PC-9 (cell line): ENCODE measurements at regions of chr2 and their contacts with region 1.

Region 1: GRCh38 chr2:181085734-181086133 is 105.3 kb downstream of the UBE2E3 start:
- DNase-seq: no peak
- H3K4me3 ChIP-seq: no peak overlapping the region
- H3K27ac ChIP-seq: no peak overlapping the region
- H3K4me1 ChIP-seq: no peaks in the 10 kb centered on the region
- H3K27me3 ChIP-seq: no peaks in the 10 kb centered on the region
- CTCF ChIP-seq: no peak

Region 2: GRCh38 chr2:181454686-181455450 is 369.1 kb after region 1 on chr2:
- CTCF ChIA-PET with region 1: interaction called, 11 read pairs
- POLR2A ChIA-PET with region 1: no interaction called
- intact Hi-C with region 1: no loop called
- DNase-seq: no peak
- H3K4me3 ChIP-seq: no peak overlapping the region
- H3K27ac ChIP-seq: no peak overlapping the region
- H3K4me1 ChIP-seq: no peaks in the 10 kb centered on the region
- H3K27me3 ChIP-seq: no peaks in the 10 kb centered on the region
- CTCF ChIP-seq: no peak